Activated T-helper 2 cell treated with anti-CD3 and anti-CD28 coated beads, Interferon-gamma antibody, Interleukin-2, Interleukin-4, amounts not matched to agents 10 μg/mL and 5 μg/mL and 100 μg/mL, durations not matched to agents 14 hours and 24 hours and 36 hours (primary cell): ENCODE measurements at regions of chr11 and their contacts with region 1.

Region 1: GRCh38 chr11:83480251-83480650 is 194.1 kb upstream of the CCDC90B start:
- DNase-seq: no peak
- H3K4me3 Mint-ChIP-seq: no peak overlapping the region
- H3K27ac Mint-ChIP-seq: no peak overlapping the region
- H3K4me1 Mint-ChIP-seq: no peaks in the 10 kb centered on the region
- H3K27me3 Mint-ChIP-seq: peaks cover 3% of the 10 kb centered on the region

Region 2: DNA sequence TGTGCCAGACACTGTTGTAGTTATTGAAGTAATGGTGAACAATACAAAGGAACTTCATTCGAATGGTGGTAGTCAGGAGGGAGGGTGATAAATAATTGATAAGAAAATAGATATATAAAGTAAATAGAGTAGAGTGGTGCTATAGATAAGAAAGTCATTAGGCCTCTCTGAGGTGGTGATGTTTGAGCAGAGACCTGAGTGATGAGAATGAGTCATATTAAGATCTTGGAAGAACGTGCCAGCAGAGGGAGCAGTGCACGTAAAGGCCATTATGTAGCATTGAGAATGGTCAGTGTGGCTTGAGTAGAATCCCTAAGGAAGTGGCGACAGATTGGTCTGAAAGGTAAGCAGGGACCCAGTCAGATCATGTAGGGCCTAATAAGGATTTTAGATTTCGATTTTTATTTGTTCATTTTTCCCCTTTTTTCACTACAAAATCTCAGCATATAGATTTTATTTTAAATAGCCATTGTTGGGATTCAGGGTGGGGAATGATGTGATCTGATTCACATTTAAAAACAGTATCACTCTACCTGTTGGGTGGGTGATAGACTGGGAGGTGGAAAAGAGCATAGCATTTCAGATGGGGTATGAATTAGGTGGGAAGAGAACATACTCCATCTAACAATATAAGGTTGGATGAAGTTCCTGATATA is 238.8 kb before region 1 on chr11:
- intact Hi-C with region 1: no loop called
- DNase-seq: no peak
- H3K4me3 Mint-ChIP-seq: no peak overlapping the region
- H3K27ac Mint-ChIP-seq: no peak overlapping the region
- H3K4me1 Mint-ChIP-seq: peaks cover 2% of the 10 kb centered on the region
- H3K27me3 Mint-ChIP-seq: peaks cover 1% of the 10 kb centered on the region

Region 3: GRCh38 chr11:83493917-83494316 is 13.7 kb after region 1 on chr11:
- intact Hi-C with region 1: loop called (anchors 1 kb)
- DNase-seq: no peak
- H3K4me3 Mint-ChIP-seq: no peak overlapping the region
- H3K27ac Mint-ChIP-seq: no peak overlapping the region
- H3K4me1 Mint-ChIP-seq: no peaks in the 10 kb centered on the region
- H3K27me3 Mint-ChIP-seq: peaks cover 4% of the 10 kb centered on the region

Region 4: DNA sequence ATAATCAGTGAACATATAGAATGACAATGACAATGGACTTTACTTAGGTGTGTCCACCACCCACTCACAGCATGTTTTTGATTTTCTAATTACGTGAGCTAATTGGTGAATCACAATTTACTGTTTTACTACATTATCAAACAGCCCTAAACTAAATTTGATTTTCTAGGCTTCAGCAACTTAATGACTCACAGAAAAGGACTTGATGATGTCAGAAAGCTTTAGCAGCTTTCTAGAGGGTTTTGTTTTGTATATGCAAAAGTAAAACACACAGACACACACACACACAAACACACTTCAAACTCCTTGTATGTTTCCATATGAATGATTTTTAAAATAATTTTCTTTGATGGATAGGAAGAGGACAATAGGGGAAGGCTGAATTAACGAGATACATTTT is 684.5 kb after region 1 on chr11:
- intact Hi-C with region 1: no loop called
- DNase-seq: no peak
- H3K4me3 Mint-ChIP-seq: no peak overlapping the region
- H3K27ac Mint-ChIP-seq: no peak overlapping the region
- H3K4me1 Mint-ChIP-seq: no peaks in the 10 kb centered on the region
- H3K27me3 Mint-ChIP-seq: no peaks in the 10 kb centered on the region